AG04449 (cell line): ENCODE measurements at regions of chr2 and their contacts with region 1.

Region 1: DNA sequence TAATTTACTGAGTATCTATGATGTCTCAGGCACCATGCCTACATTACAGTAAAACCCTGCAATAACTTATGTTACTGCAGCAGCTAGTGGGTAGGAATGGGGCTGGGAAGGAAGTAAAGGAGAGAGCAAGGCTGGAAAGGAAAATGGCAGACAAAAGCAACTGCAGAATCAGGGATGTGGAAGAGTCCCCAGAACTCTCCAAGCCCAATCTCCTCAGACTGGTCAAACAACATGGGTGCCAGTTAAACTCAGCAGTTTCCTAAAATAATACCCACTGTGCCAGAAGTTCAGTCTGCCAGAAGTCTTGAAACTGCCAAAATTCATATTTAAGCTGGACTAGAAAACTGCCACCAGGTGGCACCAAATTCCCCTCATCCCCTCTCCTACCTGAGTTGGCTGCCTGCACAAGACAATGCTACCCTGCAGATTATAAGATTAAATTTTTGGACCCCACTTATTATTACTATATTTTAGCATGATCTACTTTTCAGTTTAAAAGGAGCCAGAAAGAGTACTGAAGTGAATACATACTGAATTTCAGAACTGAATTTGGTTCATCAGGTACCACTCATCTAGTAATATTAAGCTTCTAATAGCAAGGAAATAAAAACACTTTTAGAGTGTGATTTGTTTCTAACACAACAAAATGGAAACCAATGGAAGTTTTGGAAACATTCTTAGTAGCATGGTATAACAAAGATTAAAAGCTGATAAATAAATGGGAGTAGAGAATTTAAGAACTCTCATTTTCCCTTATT is 86.8 kb upstream of the DNER start:
- DNase-seq: no peak
- H3K4me3 ChIP-seq: no peak overlapping the region
- CTCF ChIP-seq: peak; percentile 60

Region 2: DNA sequence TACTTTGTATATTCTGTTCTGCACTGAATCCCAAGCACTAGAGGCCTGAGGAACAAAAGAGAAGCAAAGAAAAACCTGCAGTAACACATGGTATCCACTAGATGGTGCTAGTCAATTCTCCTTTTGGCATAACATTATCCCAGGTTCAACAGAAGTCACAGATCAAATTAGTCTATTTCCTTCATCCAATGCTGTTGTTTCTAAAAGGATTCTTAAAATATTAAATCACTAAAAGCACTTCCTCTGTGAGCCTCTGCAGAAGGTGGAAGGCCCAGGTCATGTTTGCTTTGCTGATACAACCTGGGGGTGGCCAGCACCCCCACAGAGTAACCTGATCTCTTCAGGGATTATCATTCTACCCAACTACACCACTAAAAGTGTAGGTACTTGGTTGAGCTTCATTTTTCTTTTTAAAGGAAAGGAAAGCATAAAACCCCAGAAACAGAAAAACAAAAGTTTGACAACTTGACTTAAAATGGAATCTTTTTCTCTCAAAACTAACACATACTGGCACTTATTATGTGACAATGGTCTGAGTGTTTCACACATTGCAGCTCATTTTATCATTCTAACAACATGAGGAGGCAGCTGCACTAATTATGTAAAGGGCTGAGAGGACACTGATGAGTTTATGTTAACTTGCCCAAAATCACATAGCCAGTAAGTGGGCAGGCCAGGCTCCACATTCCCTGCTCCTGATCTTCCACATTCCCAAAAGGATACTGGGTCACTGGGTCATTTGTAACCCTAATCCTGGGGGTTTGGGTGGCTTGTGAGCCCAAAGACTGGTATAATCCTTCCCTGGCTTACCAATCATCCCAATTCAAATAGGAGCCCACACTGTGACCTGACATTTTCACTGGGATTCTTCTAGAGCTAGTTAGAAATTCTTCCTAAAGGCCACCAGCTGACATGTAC is 20.1 kb before region 1 on chr2:
- CTCF ChIA-PET with region 1: interaction called, 83 read pairs
- POLR2A ChIA-PET with region 1: no interaction called
- DNase-seq: no peak
- H3K4me3 ChIP-seq: no peak overlapping the region
- CTCF ChIP-seq: peak; percentile 81

Region 3: DNA sequence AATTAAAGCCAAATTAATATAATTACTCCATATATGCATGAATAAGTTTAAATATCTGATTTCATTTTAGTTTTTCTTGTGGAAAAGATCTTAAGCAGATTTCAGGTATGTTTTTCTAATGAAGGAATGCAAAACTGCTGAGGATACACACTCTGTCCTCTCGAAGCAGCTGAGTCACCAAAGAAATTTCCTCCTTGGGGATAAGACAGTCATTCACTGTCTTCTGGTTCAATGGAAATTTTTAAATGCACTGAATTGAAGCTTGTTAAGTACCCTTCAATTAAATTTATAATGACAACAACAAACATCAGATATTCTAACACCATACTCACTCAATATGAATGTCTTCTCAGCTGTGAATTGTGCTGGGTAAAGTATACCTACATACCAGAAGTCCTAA is 14.7 kb after region 1 on chr2:
- CTCF ChIA-PET with region 1: interaction called, 71 read pairs
- POLR2A ChIA-PET with region 1: no interaction called
- DNase-seq: peak; percentile 14
- H3K4me3 ChIP-seq: no peak overlapping the region
- CTCF ChIP-seq: no peak

Region 4: DNA sequence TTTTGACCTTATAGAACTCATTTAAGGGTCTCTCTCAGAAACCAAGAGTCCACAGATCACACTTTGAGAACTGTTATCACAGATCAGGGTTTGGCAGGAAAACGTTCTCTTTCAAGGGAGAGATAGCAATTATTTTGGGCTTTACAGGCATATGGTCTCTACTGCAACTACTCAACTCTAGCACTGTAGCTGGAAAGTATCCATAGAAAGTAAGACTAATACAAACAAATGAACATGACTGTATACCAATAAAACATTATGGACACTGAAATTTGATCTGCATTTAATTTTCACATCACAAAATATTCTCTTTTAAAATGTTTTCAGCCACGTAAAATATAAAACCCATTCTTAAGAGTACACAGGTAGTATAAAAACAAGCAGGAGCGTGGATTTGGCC is 20.1 kb after region 1 on chr2:
- CTCF ChIA-PET with region 1: interaction called, 71 read pairs
- POLR2A ChIA-PET with region 1: interaction called, 3 read pairs
- DNase-seq: no peak
- H3K4me3 ChIP-seq: no peak overlapping the region
- CTCF ChIP-seq: no peak

Region 5: GRCh38 chr2:229835596-229836283 is 34.6 kb after region 1 on chr2:
- CTCF ChIA-PET with region 1: interaction called, 12 read pairs
- POLR2A ChIA-PET with region 1: no interaction called
- DNase-seq: peak; percentile 19
- H3K4me3 ChIP-seq: no peak overlapping the region
- CTCF ChIP-seq: no peak

Region 6: DNA sequence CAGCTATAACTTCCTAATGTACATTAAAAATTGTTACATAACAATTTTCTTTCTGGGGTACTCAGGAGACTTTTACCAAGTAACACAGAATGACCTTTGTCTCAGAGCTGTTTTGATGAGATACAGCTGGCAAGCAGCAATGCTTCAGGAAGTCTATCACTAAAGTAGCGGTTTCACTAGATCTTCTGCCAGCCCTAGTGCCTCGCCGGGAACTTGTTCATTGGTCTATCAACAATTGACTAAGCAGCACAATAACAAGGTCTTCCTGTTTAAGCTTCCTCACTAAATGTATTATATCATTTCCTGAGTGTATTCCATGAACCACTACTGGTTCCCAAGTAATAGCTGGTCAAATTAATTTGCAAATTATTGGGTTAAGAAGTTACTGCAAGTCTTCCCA is 51.4 kb after region 1 on chr2:
- CTCF ChIA-PET with region 1: interaction called, 13 read pairs
- POLR2A ChIA-PET with region 1: interaction called, 3 read pairs
- DNase-seq: no peak
- H3K4me3 ChIP-seq: no peak overlapping the region
- CTCF ChIP-seq: no peak

Region 7: DNA sequence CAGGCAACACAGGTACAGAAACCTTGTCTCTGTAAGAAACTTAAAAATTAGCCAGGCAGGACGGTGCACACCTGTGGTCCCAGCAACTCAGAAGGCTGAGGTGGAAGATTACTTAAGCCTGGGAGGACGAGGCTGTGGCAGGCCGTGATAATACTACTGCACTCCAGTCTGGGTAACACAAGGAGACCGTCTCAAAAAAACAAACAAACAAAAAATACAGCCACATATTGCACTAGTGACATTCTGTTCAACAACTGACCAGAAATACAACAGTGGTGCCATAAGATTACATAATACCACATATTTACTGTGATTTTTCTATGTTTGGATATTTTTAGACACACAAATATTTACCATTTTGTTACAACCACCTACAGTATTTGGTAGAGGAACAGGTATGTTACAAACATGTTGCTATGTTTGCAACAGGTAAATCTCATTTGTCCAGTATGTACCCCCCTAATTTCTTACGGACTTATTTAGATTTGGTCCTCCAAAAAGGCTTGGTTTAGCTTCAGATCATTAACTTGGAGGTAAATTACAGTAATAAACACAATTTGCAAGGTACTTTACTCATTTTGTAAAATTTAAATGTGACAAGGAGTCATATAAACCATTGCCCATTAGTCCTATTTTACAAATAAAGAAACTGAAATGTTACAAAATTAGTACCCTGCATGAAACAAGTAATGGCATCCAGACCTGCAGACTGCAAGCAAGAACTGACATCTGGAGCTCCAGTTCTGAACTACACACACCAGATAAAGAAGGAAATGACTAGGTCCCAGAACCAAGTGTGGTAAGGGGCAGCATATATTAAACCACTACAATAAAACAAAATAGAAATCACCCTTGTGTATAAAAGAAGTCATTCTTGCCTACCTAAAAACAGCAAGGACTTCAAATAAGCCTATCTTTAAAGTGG is 83.9 kb after region 1 on chr2:
- CTCF ChIA-PET with region 1: interaction called, 14 read pairs
- POLR2A ChIA-PET with region 1: no interaction called
- DNase-seq: no peak
- H3K4me3 ChIP-seq: no peak overlapping the region
- CTCF ChIP-seq: no peak

Region 8: DNA sequence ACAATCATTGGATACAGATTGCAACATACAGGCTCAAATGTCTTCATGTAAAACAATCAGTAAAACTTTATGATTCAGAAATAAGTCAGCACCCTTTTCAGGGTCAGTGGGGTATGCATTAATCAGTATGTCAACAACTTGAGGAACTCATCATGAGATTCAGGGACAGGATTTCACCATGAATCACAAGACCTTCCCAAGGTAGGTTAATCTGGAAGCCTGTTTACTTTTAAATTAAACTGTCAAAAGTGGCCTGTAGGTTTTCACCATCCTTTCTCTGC is 719.6 kb after region 1 on chr2:
- CTCF ChIA-PET with region 1: no interaction called
- POLR2A ChIA-PET with region 1: no interaction called
- DNase-seq: peak; percentile 4
- H3K4me3 ChIP-seq: no peak overlapping the region
- CTCF ChIP-seq: no peak